GM12878 (cell line): ENCODE measurements at regions of chr6 and their contacts with region 1.

Region 1: DNA sequence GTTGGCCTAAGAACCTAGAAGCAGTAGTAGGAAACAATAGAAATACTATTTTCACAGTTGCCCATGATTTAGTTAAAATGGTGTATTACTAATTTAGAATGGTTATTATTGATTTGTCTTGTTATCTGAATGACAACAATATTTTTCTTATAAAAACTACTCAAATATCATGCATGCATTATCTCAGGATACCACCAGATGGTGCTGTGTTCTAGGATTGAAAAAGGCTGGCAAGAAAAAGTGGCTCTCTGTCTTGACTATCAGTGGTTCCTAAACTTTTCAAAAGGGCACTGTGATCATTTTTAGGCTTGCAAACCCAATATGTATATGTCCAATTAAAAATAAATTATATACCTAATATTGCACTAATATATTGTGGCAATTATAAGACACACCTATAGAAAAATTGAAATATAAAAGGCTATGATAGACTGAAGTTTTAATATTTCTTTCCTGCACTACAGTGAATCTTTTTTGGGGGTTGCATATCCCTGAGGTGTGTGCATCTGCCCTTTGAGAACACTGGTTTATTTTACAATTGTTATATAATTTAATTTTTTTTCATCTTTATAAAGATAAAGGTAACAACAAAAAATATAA is 131.7 kb upstream of the MLIP start:
- DNase-seq: no peak
- ATAC-seq: no peak
- H3K4me3 ChIP-seq: no peak overlapping the region
- H3K27ac ChIP-seq: no peak overlapping the region
- H3K4me1 ChIP-seq: no peaks in the 10 kb centered on the region
- H3K27me3 ChIP-seq: no peaks in the 10 kb centered on the region
- CTCF ChIP-seq: peak; percentile 69 to 75 (median 70)
- EP300 ChIP-seq: no peak
- POLR2A ChIP-seq: no peak
- RAD21 ChIP-seq: peak; percentile 79

Region 2: GRCh38 chr6:54053881-54054391 is 74.4 kb after region 1 on chr6:
- CTCF ChIA-PET with region 1: no interaction called
- POLR2A ChIA-PET with region 1: no interaction called
- RAD21 ChIA-PET with region 1: no interaction called
- SMC1A ChIA-PET with region 1: no interaction called
- in situ Hi-C with region 1: no loop called
- intact Hi-C with region 1: no loop called
- DNase-seq: no peak
- ATAC-seq: no peak
- H3K4me3 ChIP-seq: no peak overlapping the region
- H3K27ac ChIP-seq: no peak overlapping the region
- H3K4me1 ChIP-seq: no peaks in the 10 kb centered on the region
- H3K27me3 ChIP-seq: no peaks in the 10 kb centered on the region
- CTCF ChIP-seq: no peak
- EP300 ChIP-seq: no peak
- POLR2A ChIP-seq: no peak
- RAD21 ChIP-seq: no peak

Region 3: GRCh38 chr6:55069132-55069781 is 1089.7 kb after region 1 on chr6:
- CTCF ChIA-PET with region 1: no interaction called
- POLR2A ChIA-PET with region 1: no interaction called
- RAD21 ChIA-PET with region 1: no interaction called
- SMC1A ChIA-PET with region 1: no interaction called
- in situ Hi-C with region 1: loop called (anchors 5 kb)
- intact Hi-C with region 1: no loop called
- DNase-seq: no peak
- ATAC-seq: peak; percentile 58
- H3K4me3 ChIP-seq: no peak overlapping the region
- H3K27ac ChIP-seq: no peak overlapping the region
- H3K4me1 ChIP-seq: no peaks in the 10 kb centered on the region
- H3K27me3 ChIP-seq: no peaks in the 10 kb centered on the region
- CTCF ChIP-seq: peak; percentile 50 to 57 (median 54); a peak in 5 of 6 replicates
- EP300 ChIP-seq: no peak
- POLR2A ChIP-seq: no peak
- RAD21 ChIP-seq: peak; percentile 87